ENCODE measurements at regions of chr1 and their contacts with region 1.

Region 1: GRCh38 chr1:205321164-205321958 is at the start of gene NUAK2:
- DNase-seq: no peak

Region 2: DNA sequence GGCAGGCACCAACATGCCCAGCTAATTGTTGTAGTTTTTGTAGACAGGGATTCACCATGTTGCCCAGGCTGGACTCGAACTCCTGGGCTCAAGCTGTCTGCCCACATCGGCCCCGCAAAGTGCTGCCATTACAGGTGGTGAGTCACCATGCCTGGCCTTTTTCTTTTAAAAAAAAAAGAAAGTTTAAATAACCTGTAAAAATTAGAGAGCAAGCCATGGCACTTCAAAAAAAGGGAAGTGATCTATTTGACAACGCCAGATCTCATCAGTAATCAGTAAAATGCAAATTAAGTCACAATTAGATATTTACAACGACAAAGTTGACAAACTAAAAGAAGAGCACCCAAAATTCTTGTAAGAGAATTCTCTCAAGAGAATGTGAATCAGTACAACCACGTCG is 196.6 kb before region 1 on chr1:
- in situ Hi-C with region 1: no loop called
- DNase-seq: peak; percentile 42

Region 3: GRCh38 chr1:205273551-205273982 is 47.8 kb before region 1 on chr1:
- in situ Hi-C with region 1: loop called (anchors 10 kb)
- DNase-seq: peak; percentile 78

Measured in KBM-7 (cell line).